B cell (primary cell): ENCODE measurements at regions of chr11 and their contacts with region 1.

Region 1: DNA sequence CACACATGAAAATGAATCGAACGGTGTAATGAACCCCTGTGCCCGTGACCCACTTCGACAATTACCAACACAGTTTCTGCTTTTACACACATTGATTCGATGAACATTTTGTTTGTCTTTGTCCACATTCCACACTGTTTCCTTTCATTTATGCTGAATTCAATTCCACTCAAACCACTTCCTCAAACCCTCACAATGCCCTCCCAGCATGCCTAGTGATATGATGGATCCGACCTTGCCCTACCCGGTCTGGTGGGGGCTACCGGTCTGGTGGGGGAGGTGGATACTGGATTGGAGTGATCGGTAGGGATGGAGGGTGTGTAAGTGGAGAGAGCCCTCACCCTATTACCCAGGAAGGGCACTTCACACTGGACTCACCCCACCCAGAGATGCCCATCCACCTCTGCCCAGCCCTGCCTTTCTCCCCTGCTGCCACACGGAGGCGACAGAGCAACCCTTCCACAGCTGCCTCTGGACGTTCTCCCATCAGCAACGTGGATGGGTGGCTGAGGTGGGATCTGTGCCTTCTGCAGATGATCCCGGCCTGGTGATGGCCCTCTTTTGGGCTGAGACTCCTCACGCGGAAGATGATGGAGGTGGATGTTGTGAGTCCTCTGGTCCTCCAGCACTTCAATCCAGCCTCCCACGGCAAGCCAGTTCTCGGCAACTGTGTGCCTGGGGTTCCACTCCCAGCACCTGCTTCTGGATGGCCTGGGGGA is 33.0 kb upstream of the P2RY2 start:
- DNase-seq: peak; percentile 77
- ATAC-seq: peak; percentile 40
- H3K4me3 ChIP-seq: peak overlapping the region; percentile 1 to 37 (median 23)
- H3K4me3 Mint-ChIP-seq: peak overlapping the region; percentile 76
- H3K27ac ChIP-seq: no peak overlapping the region
- H3K27ac Mint-ChIP-seq: peak overlapping the region; percentile 46
- H3K4me1 ChIP-seq: peaks cover 22 to 43% of the 10 kb centered on the region in 2 donors
- H3K4me1 Mint-ChIP-seq: peaks cover 35% of the 10 kb centered on the region
- H3K27me3 ChIP-seq: no peaks in the 10 kb centered on the region
- H3K27me3 Mint-ChIP-seq: no peaks in the 10 kb centered on the region
- CTCF ChIP-seq: peak; percentile 88

Region 2: GRCh38 chr11:72924568-72925190 is 260.4 kb before region 1 on chr11:
- CTCF ChIA-PET with region 1: interaction called, 187 read pairs
- POLR2A ChIA-PET with region 1: no interaction called
- intact Hi-C with region 1: no loop called
- DNase-seq: peak; percentile 53
- ATAC-seq: peak; percentile 54
- H3K4me3 ChIP-seq: no peak overlapping the region
- H3K4me3 Mint-ChIP-seq: no peak overlapping the region
- H3K27ac ChIP-seq: peak overlapping the region in 1 of 2 donors; percentile 72
- H3K27ac Mint-ChIP-seq: peak overlapping the region; percentile 73
- H3K4me1 ChIP-seq: peaks cover 14 to 18% of the 10 kb centered on the region in 2 donors
- H3K4me1 Mint-ChIP-seq: peaks cover 43% of the 10 kb centered on the region
- H3K27me3 ChIP-seq: no peaks in the 10 kb centered on the region
- H3K27me3 Mint-ChIP-seq: no peaks in the 10 kb centered on the region
- CTCF ChIP-seq: peak; percentile 70

Region 3: GRCh38 chr11:73206801-73207200 is 21.7 kb after region 1 on chr11:
- CTCF ChIA-PET with region 1: interaction called, 12 read pairs
- POLR2A ChIA-PET with region 1: no interaction called
- intact Hi-C with region 1: no loop called
- DNase-seq: no peak
- ATAC-seq: no peak
- H3K4me3 ChIP-seq: no peak overlapping the region
- H3K4me3 Mint-ChIP-seq: no peak overlapping the region
- H3K27ac ChIP-seq: no peak overlapping the region
- H3K27ac Mint-ChIP-seq: no peak overlapping the region
- H3K4me1 ChIP-seq: peaks cover 0 to 5% of the 10 kb centered on the region in 2 donors
- H3K4me1 Mint-ChIP-seq: peaks cover 2% of the 10 kb centered on the region
- H3K27me3 ChIP-seq: no peaks in the 10 kb centered on the region
- H3K27me3 Mint-ChIP-seq: peaks cover 24% of the 10 kb centered on the region
- CTCF ChIP-seq: no peak

Region 4: GRCh38 chr11:73236854-73237253 is 51.7 kb after region 1 on chr11:
- CTCF ChIA-PET with region 1: interaction called, 281 read pairs
- POLR2A ChIA-PET with region 1: no interaction called
- intact Hi-C with region 1: loop called (anchors 1 kb)
- DNase-seq: peak; percentile 50
- ATAC-seq: peak; percentile 54
- H3K4me3 ChIP-seq: no peak overlapping the region
- H3K4me3 Mint-ChIP-seq: no peak overlapping the region
- H3K27ac ChIP-seq: no peak overlapping the region
- H3K27ac Mint-ChIP-seq: no peak overlapping the region
- H3K4me1 ChIP-seq: no peaks in the 10 kb centered on the region
- H3K4me1 Mint-ChIP-seq: no peaks in the 10 kb centered on the region
- H3K27me3 ChIP-seq: no peaks in the 10 kb centered on the region
- H3K27me3 Mint-ChIP-seq: no peaks in the 10 kb centered on the region
- CTCF ChIP-seq: peak; percentile 51

Region 5: DNA sequence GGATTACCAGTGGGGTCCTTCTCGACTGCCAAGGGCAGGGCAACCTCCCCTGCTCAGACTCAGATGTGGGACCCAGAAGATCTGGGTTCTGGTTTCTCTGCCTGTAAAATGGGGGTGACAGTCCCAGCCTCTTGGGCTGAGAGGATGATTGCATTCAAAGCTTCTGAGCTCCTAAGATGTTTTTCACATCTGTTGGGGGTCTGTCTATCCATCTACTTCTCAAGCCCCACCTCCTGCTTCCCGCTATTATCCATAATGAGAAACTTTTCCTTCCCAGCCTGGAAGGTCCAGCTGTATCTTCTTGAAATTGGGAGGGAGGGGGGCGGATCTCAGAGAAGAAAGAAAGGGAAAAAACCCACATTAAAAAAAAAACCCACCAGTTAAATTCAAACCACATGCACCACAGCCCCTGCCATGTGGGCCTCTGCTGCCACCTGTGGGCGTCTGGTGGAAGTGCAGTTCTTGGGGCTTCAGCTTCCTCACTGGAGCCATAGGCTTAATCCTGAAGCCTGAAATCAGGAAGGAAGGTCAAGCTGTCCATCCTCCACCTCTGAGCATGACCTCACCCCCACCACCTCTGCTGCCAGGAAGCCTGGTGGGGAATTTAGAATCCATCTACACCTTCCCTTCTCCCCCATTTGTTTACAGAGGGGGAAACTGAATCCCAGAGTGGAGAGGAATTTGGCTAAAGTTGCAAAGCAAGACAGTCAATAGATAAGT is 150.3 kb after region 1 on chr11:
- CTCF ChIA-PET with region 1: interaction called, 16 read pairs
- POLR2A ChIA-PET with region 1: no interaction called
- intact Hi-C with region 1: loop called (anchors 1 kb)
- DNase-seq: peak; percentile 81
- ATAC-seq: peak; percentile 81
- H3K4me3 ChIP-seq: no peak overlapping the region
- H3K4me3 Mint-ChIP-seq: no peak overlapping the region
- H3K27ac ChIP-seq: no peak overlapping the region
- H3K27ac Mint-ChIP-seq: no peak overlapping the region
- H3K4me1 ChIP-seq: no peaks in the 10 kb centered on the region
- H3K4me1 Mint-ChIP-seq: no peaks in the 10 kb centered on the region
- H3K27me3 ChIP-seq: peaks cover 0 to 8% (median 2%) of the 10 kb centered on the region in 4 experiments
- H3K27me3 Mint-ChIP-seq: no peaks in the 10 kb centered on the region
- CTCF ChIP-seq: peak; percentile 99